Calu3 (cell line): ENCODE measurements at regions of chr5 and their contacts with region 1.

Region 1: GRCh38 chr5:157148734-157149615 is 6.3 kb upstream of the MED7 start:
- DNase-seq: peak; percentile 86
- H3K4me3 Mint-ChIP-seq: no peak overlapping the region
- H3K27ac Mint-ChIP-seq: peak overlapping the region; percentile 50
- H3K4me1 Mint-ChIP-seq: peaks cover 10% of the 10 kb centered on the region
- H3K27me3 Mint-ChIP-seq: no peaks in the 10 kb centered on the region
- CTCF ChIP-seq: peak; percentile 88

Region 2: GRCh38 chr5:157253547-157253946 is 104.6 kb after region 1 on chr5:
- CTCF ChIA-PET with region 1: no interaction called
- intact Hi-C with region 1: loop called (anchors 2 kb)
- DNase-seq: peak; percentile 72
- H3K4me3 Mint-ChIP-seq: no peak overlapping the region
- H3K27ac Mint-ChIP-seq: no peak overlapping the region
- H3K4me1 Mint-ChIP-seq: no peaks in the 10 kb centered on the region
- H3K27me3 Mint-ChIP-seq: peaks cover 15% of the 10 kb centered on the region
- CTCF ChIP-seq: peak; percentile 95

Region 3: GRCh38 chr5:157312492-157312891 is 163.5 kb after region 1 on chr5:
- CTCF ChIA-PET with region 1: interaction called, 5 read pairs
- intact Hi-C with region 1: loop called (anchors 2 kb)
- DNase-seq: peak; percentile 56
- H3K4me3 Mint-ChIP-seq: no peak overlapping the region
- H3K27ac Mint-ChIP-seq: no peak overlapping the region
- H3K4me1 Mint-ChIP-seq: no peaks in the 10 kb centered on the region
- H3K27me3 Mint-ChIP-seq: no peaks in the 10 kb centered on the region
- CTCF ChIP-seq: peak; percentile 64

Region 4: GRCh38 chr5:157486221-157486681 is 337.3 kb after region 1 on chr5:
- CTCF ChIA-PET with region 1: no interaction called
- intact Hi-C with region 1: no loop called
- DNase-seq: no peak
- H3K4me3 Mint-ChIP-seq: no peak overlapping the region
- H3K27ac Mint-ChIP-seq: no peak overlapping the region
- H3K4me1 Mint-ChIP-seq: no peaks in the 10 kb centered on the region
- H3K27me3 Mint-ChIP-seq: no peaks in the 10 kb centered on the region
- CTCF ChIP-seq: no peak

Region 5: GRCh38 chr5:157502143-157502647 is 353.2 kb after region 1 on chr5:
- CTCF ChIA-PET with region 1: no interaction called
- intact Hi-C with region 1: no loop called
- DNase-seq: no peak
- H3K4me3 Mint-ChIP-seq: no peak overlapping the region
- H3K27ac Mint-ChIP-seq: no peak overlapping the region
- H3K4me1 Mint-ChIP-seq: peaks cover 8% of the 10 kb centered on the region
- H3K27me3 Mint-ChIP-seq: no peaks in the 10 kb centered on the region
- CTCF ChIP-seq: no peak